Naive thymus-derived CD4-positive, alpha-beta T cell (primary cell): ENCODE measurements at regions of chr1 and their contacts with region 1.

Region 1: GRCh38 chr1:10032590-10033358 is at the start of gene UBE4B:
- DNase-seq: peak; percentile 98 to 100 (median 99)
- ATAC-seq: peak; percentile 97
- H3K4me3 ChIP-seq: peak within 1 kb of the TSS; percentile 96
- H3K4me3 Mint-ChIP-seq: peak within 1 kb of the TSS; percentile 79 to 98 (median 96)
- H3K27ac ChIP-seq: peak within 1 kb of the TSS; percentile 94
- H3K27ac Mint-ChIP-seq: peak within 1 kb of the TSS; percentile 91 to 98 (median 97)
- H3K4me1 ChIP-seq: peaks cover 14 to 15% of the 10 kb centered on the region in 2 donors
- H3K4me1 Mint-ChIP-seq: peaks cover 20 to 34% (median 28%) of the 10 kb centered on the region in 7 donors
- H3K27me3 ChIP-seq: no peaks in the 10 kb centered on the region
- H3K27me3 Mint-ChIP-seq: no peaks in the 10 kb centered on the region
- total RNA-seq, gene UBE4B: 37.9 to 48.3 (median 39.3) TPM

Region 2: DNA sequence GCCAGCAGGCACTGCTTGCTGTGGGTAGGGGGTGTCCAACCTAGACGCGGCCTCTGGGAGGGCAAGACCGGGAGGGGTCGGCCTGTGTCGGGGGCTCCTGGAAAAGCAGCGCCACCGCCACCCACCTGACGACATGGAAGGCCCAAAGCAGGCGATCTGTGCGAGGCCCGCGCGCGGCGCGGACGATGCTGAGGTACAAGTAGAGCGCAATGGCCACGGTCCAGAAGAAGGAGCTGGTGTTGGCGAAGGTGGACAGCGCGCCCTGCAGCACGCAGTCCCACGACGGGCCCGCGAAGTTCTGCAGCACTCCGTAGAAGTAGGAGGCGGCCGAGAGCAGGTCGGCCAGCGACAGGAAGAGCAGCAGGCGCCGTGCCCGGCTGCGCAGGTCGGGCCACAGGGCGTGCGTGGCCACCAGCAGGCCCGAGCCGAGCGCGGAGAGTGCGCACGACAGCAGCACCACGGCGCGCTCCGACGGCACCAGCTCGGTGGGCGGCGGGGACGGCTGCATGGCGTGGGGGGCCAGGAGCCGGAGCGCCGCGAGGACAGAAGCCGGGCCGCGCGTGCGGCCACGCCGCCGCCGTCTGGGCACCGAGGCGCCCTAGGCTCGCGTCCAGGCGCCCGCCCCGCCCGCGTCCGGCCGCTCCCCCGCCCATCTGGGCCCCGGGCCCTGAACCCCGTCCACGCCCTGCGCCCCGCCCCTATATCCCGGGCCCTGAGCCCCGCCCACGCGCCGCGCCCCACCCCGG is 904.1 kb before region 1 on chr1 and contains the start of gene GPR157:
- CTCF ChIA-PET with region 1: no interaction called
- POLR2A ChIA-PET with region 1: no interaction called
- intact Hi-C with region 1: loop called in 1 of 2 experiments (anchors 2 kb)
- DNase-seq: peak; percentile 53 to 82 (median 70)
- ATAC-seq: peak; percentile 95
- H3K4me3 ChIP-seq: peak within 1 kb of the TSS; percentile 67
- H3K4me3 Mint-ChIP-seq: peak within 1 kb of the TSS; percentile 85 to 95 (median 90)
- H3K27ac ChIP-seq: peak within 1 kb of the TSS; percentile 67
- H3K27ac Mint-ChIP-seq: peak within 1 kb of the TSS; percentile 59 to 94 (median 87)
- H3K4me1 ChIP-seq: peaks cover 8 to 24% of the 10 kb centered on the region in 2 donors
- H3K4me1 Mint-ChIP-seq: peaks cover 19 to 40% (median 32%) of the 10 kb centered on the region in 7 donors
- H3K27me3 ChIP-seq: no peaks in the 10 kb centered on the region
- H3K27me3 Mint-ChIP-seq: peaks cover 0 to 25% (median 0%) of the 10 kb centered on the region in 5 donors
- total RNA-seq, gene GPR157: 4.0 to 14.1 (median 5.9) TPM

Region 3: GRCh38 chr1:9629445-9630201 is 403.2 kb before region 1 on chr1:
- CTCF ChIA-PET with region 1: no interaction called
- POLR2A ChIA-PET with region 1: no interaction called
- intact Hi-C with region 1: loop called (anchors 1 to 5 kb)
- DNase-seq: peak; percentile 53 to 86 (median 83)
- ATAC-seq: peak; percentile 69
- H3K4me3 ChIP-seq: peak overlapping the region; percentile 64
- H3K4me3 Mint-ChIP-seq: peak overlapping the region; percentile 90 to 100 (median 98)
- H3K27ac ChIP-seq: peak overlapping the region; percentile 87
- H3K27ac Mint-ChIP-seq: peak overlapping the region; percentile 85 to 98 (median 94)
- H3K4me1 ChIP-seq: peaks cover 35 to 38% of the 10 kb centered on the region in 2 donors
- H3K4me1 Mint-ChIP-seq: peaks cover 46 to 72% (median 65%) of the 10 kb centered on the region in 7 donors
- H3K27me3 ChIP-seq: no peaks in the 10 kb centered on the region
- H3K27me3 Mint-ChIP-seq: peaks cover 0 to 2% (median 0%) of the 10 kb centered on the region in 5 donors

Region 4: GRCh38 chr1:9797049-9797448 is 235.7 kb before region 1 on chr1:
- CTCF ChIA-PET with region 1: no interaction called
- POLR2A ChIA-PET with region 1: no interaction called
- intact Hi-C with region 1: no loop called
- DNase-seq: no peak
- ATAC-seq: no peak
- H3K4me3 ChIP-seq: no peak overlapping the region
- H3K4me3 Mint-ChIP-seq: peak overlapping the region in 2 of 10 donors; percentile 38 to 63
- H3K27ac ChIP-seq: no peak overlapping the region
- H3K27ac Mint-ChIP-seq: peak overlapping the region in 6 of 9 donors; percentile 24 to 91 (median 54)
- H3K4me1 ChIP-seq: peaks cover 9 to 25% of the 10 kb centered on the region in 2 donors
- H3K4me1 Mint-ChIP-seq: peaks cover 48 to 84% (median 74%) of the 10 kb centered on the region in 7 donors
- H3K27me3 ChIP-seq: no peaks in the 10 kb centered on the region
- H3K27me3 Mint-ChIP-seq: no peaks in the 10 kb centered on the region

Region 5: DNA sequence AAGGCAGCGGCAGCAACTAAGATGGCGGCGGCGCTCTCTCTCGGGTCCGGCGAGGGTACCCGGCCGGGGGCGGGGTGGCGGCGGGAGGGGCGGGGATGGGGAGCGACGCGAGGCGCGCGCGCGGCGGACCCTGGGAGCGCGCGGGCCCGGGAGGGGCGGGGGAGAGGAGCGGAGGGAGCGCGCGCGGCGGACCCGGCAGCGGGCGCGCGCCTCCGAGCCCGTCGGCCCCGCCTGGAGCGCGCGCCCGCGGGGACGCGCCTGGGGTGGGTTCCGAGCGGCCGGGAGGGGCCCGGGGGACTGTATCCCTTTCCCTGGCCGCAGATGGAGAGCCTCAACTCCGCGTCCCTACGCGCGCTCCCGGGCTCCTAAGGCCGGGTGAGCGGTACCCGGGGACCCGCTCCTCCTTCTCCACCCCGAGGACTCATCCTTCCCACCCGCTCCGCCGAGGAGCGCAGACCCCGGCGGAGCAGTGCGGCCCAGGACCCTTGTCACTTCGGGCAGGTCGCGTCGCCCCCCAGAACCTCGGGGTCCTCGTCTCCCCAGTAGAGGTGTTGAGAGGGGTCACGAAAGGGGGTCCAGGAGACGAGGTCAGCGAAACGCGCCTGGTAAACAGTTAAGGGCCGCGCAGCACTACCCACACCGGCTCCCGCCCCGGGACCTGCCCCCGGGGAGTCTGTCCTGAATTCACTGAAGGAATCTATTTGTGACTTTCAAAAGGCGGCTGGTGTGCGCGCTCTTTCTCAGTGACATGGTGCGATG is 208.7 kb before region 1 on chr1 and contains the start of gene CLSTN1:
- CTCF ChIA-PET with region 1: no interaction called
- POLR2A ChIA-PET with region 1: no interaction called
- intact Hi-C with region 1: loop called in 1 of 2 experiments (anchors 2 kb)
- DNase-seq: peak; percentile 73 to 88 (median 84)
- ATAC-seq: peak; percentile 86
- H3K4me3 ChIP-seq: peak within 1 kb of the TSS; percentile 82
- H3K4me3 Mint-ChIP-seq: peak within 1 kb of the TSS; percentile 95 to 99 (median 98)
- H3K27ac ChIP-seq: peak within 1 kb of the TSS; percentile 68
- H3K27ac Mint-ChIP-seq: peak within 1 kb of the TSS; percentile 80 to 97 (median 93)
- H3K4me1 ChIP-seq: peaks cover 24 to 34% of the 10 kb centered on the region in 2 donors
- H3K4me1 Mint-ChIP-seq: peaks cover 31 to 52% (median 46%) of the 10 kb centered on the region in 7 donors
- H3K27me3 ChIP-seq: no peaks in the 10 kb centered on the region
- H3K27me3 Mint-ChIP-seq: peaks cover 0 to 3% (median 0%) of the 10 kb centered on the region in 5 donors
- total RNA-seq, gene CLSTN1: 68.6 to 116 (median 85.6) TPM

Region 6: DNA sequence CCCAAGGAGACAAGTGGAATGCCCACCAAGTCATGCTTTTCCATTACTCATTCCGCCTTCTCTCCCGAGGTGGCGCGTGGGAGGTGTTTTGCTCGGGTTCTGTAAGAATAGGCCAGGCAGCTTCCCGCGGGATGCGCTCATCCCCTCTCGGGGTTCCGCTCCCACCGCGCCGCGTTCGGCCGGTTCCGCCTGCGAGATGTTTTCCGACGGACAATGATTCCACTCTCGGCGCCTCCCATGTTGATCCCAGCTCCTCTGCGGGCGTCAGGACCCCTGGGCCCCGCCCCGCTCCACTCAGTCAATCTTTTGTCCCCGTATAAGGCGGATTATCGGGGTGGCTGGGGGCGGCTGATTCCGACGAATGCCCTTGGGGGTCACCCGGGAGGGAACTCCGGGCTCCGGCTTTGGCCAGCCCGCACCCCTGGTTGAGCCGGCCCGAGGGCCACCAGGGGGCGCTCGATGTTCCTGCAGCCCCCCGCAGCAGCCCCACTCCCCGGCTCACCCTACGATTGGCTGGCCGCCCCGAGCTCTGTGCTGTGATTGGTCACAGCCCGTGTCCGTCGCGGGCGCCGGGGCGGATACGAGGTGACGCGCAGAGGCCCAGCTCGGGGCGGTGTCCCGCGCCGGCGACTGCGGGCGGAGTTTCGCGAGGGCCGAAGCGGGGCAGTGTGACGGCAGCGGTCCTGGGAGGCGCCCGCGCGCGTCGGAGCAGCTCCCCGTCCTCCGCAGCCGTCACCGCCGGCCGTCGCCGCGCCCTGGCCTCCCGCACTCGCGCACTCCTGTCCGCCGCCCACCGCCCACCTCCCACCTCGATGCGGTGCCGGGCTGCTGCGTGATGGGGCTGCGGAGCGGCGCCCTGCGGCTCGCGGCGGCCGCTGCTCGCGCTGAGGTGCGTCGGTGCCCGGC is 177.4 kb after region 1 on chr1 and contains the start of gene KIF1B:
- CTCF ChIA-PET with region 1: no interaction called
- POLR2A ChIA-PET with region 1: no interaction called
- intact Hi-C with region 1: loop called in 1 of 2 experiments (anchors 2 kb)
- DNase-seq: peak; percentile 93 to 98 (median 95)
- ATAC-seq: peak; percentile 99
- H3K4me3 ChIP-seq: peak within 1 kb of the TSS; percentile 94
- H3K4me3 Mint-ChIP-seq: peak within 1 kb of the TSS; percentile 83 to 93 (median 90)
- H3K27ac ChIP-seq: peak within 1 kb of the TSS; percentile 75
- H3K27ac Mint-ChIP-seq: peak within 1 kb of the TSS; percentile 51 to 82 (median 67)
- H3K4me1 ChIP-seq: peaks cover 5 to 15% of the 10 kb centered on the region in 2 donors
- H3K4me1 Mint-ChIP-seq: peaks cover 14 to 37% (median 21%) of the 10 kb centered on the region in 7 donors
- H3K27me3 ChIP-seq: peaks cover 0 to 4% of the 10 kb centered on the region in 2 donors
- H3K27me3 Mint-ChIP-seq: peaks cover 0 to 8% (median 0%) of the 10 kb centered on the region in 5 donors
- total RNA-seq, gene KIF1B: 10.4 to 21.6 (median 13.4) TPM

Region 7: DNA sequence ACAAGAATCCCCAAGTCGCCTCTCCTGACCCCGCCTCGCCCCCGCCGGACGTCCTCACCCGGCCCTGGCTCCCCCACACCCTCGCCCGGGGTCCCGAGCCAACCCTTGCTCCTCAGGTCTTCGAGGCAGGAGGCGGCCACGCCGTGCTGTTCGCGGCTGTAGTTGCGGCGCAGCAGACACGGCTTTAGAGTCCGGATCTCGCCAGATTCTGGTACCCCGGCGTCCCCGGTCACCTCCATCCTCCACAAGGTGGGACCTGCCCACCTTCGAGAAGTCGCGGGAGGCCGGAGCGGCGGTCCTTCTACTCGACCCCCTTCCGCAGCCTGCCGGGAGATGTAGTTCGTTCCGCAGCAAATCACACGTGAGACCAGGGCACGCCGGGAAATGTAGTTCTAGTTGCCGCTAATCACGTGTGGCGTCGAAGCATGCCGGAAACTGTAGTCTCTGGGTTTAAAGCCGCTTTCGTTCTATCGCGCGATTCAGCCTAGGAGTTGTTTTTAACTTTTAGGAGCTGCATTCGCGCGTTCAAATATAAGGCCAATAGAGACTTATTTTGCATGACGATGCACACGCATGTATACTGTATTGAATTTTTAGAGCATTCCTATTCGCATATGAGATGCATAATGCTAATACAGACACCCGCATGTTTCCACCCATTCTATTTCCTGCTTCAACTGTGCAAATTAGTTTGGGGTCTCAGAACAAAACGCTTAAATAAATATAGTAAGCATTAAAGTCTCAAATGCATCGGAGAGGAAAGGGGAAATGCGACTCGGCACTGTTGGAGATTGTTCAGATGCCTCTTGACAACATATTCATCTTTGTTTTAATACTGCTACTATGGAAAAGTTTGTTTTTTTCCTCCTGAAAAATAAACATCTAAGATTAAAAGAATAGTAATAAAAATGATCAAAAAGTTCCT is 439.7 kb after region 1 on chr1 and contains the start of gene DFFA:
- CTCF ChIA-PET with region 1: no interaction called
- POLR2A ChIA-PET with region 1: no interaction called
- intact Hi-C with region 1: loop called (anchors 1 to 2 kb)
- DNase-seq: peak; percentile 68 to 95 (median 87)
- ATAC-seq: peak; percentile 90
- H3K4me3 ChIP-seq: peak within 1 kb of the TSS; percentile 69
- H3K4me3 Mint-ChIP-seq: peak within 1 kb of the TSS; percentile 87 to 96 (median 92)
- H3K27ac ChIP-seq: peak within 1 kb of the TSS; percentile 68
- H3K27ac Mint-ChIP-seq: peak within 1 kb of the TSS; percentile 78 to 93 (median 90)
- H3K4me1 ChIP-seq: peaks cover 21 to 37% of the 10 kb centered on the region in 2 donors
- H3K4me1 Mint-ChIP-seq: peaks cover 12 to 58% (median 49%) of the 10 kb centered on the region in 7 donors
- H3K27me3 ChIP-seq: no peaks in the 10 kb centered on the region
- H3K27me3 Mint-ChIP-seq: no peaks in the 10 kb centered on the region
- total RNA-seq, gene DFFA: 13.5 to 36.0 (median 23.4) TPM